Cardiac septum (tissue), 1 donor: ENCODE measurements at regions of chr1 and their contacts with region 1.

Region 1: GRCh38 chr1:160844447-160845232 is 18.0 kb downstream of the CD244 start:
- DNase-seq: no peak

Region 2: GRCh38 chr1:160755911-160756848 is 88.5 kb before region 1 on chr1:
- intact Hi-C with region 1: no loop called
- DNase-seq: no peak

Region 3: GRCh38 chr1:160925652-160926241 is 81.1 kb after region 1 on chr1:
- intact Hi-C with region 1: loop called (anchors 5 kb)
- DNase-seq: no peak

Region 4: GRCh38 chr1:160942926-160943325 is 98.3 kb after region 1 on chr1:
- intact Hi-C with region 1: no loop called
- DNase-seq: no peak